Colonic mucosa (tissue), 4 donors: ENCODE measurements at regions of chr9 and their contacts with region 1.

Region 1: DNA sequence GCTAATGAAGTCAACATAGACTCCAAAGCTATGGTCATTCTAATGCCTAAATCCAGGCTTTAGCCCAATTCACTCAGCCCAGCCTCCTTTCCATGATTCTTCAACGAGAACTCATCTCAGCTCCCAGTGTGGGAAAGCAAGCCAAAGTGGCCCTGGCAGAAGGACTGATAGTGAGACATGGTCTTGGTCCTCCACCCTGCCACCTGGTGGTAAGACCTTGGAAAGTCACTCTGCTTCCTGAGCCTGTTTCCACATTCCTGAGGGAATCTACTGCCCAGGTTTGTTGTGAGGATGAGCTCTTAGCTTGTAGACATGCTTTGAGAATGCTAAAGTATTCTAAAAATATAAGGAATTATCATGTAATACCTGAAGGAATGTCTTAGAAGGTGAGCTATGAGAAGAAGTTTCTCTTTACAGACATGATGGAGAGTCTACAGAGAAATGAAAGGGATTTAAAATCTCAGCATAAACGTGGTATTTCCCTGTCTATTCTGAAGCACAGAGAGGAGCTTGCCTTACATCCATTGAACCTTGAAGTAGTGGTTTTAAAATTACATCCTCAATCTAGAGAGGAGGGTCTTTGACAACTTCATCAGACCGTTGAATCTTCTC is 173.5 kb downstream of the TRIM32 start:
- DNase-seq: peak; percentile 64
- H3K4me3 ChIP-seq: no peak overlapping the region
- H3K27ac ChIP-seq: no peak overlapping the region
- H3K4me1 ChIP-seq: no peaks in the 10 kb centered on the region
- H3K27me3 ChIP-seq: no peaks in the 10 kb centered on the region
- CTCF ChIP-seq: peak; percentile 67

Region 2: GRCh38 chr9:115591584-115591984 is 1269.0 kb before region 1 on chr9:
- intact Hi-C with region 1: loop called (anchors 10 kb)
- DNase-seq: peak; percentile 57
- H3K4me3 ChIP-seq: no peak overlapping the region
- H3K27ac ChIP-seq: no peak overlapping the region
- H3K4me1 ChIP-seq: no peaks in the 10 kb centered on the region
- H3K27me3 ChIP-seq: no peaks in the 10 kb centered on the region
- CTCF ChIP-seq: no peak

Region 3: GRCh38 chr9:116262448-116262847 is 598.2 kb before region 1 on chr9:
- intact Hi-C with region 1: no loop called
- DNase-seq: no peak
- H3K4me3 ChIP-seq: no peak overlapping the region
- H3K27ac ChIP-seq: no peak overlapping the region
- H3K4me1 ChIP-seq: no peaks in the 10 kb centered on the region
- H3K27me3 ChIP-seq: no peaks in the 10 kb centered on the region
- CTCF ChIP-seq: no peak

Region 4: DNA sequence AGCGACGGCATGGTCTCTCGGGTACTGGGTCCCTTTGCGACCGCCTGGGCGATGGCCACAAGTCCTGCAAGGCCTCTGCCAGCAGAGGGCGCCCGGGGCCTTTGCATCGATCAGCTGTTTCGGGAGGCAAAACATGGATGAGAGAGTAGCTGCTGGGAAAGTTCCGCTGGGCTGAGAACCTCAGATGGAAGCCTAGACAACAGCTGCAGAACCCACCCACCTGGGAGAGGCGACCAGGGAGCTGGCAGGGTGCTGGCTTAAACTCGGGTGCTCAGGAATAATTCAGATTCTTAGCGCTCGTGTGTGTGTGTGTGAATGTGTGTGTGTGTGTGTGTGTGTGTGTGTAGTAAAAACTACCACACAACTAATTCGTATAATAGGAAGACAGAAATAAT is 123.5 kb before region 1 on chr9:
- intact Hi-C with region 1: loop called (anchors 5 kb)
- DNase-seq: peak; percentile 79
- H3K4me3 ChIP-seq: no peak overlapping the region
- H3K27ac ChIP-seq: no peak overlapping the region
- H3K4me1 ChIP-seq: no peaks in the 10 kb centered on the region
- H3K27me3 ChIP-seq: no peaks in the 10 kb centered on the region
- CTCF ChIP-seq: peak; percentile 88

Region 5: GRCh38 chr9:116817762-116818161 is 42.9 kb before region 1 on chr9:
- intact Hi-C with region 1: no loop called
- DNase-seq: no peak
- H3K4me3 ChIP-seq: no peak overlapping the region
- H3K27ac ChIP-seq: no peak overlapping the region
- H3K4me1 ChIP-seq: no peaks in the 10 kb centered on the region
- H3K27me3 ChIP-seq: no peaks in the 10 kb centered on the region
- CTCF ChIP-seq: no peak